Heart left ventricle (tissue), 16 donors: ENCODE measurements at regions of chr11 and their contacts with region 1.

Region 1: GRCh38 chr11:47071791-47072261 is 104.9 kb downstream of the ARFGAP2 start:
- DNase-seq: peak in 1 of 5 donors; percentile 47
- ATAC-seq: peak; percentile 33 to 69 (median 57)
- H3K4me3 ChIP-seq: no peak overlapping the region
- H3K27ac ChIP-seq: peak overlapping the region in 1 of 12 donors; percentile 11
- H3K4me1 ChIP-seq: peaks cover 0 to 13% (median 7%) of the 10 kb centered on the region in 12 donors
- H3K27me3 ChIP-seq: no peaks in the 10 kb centered on the region
- CTCF ChIP-seq: no peak
- POLR2A ChIP-seq: no peak

Region 2: DNA sequence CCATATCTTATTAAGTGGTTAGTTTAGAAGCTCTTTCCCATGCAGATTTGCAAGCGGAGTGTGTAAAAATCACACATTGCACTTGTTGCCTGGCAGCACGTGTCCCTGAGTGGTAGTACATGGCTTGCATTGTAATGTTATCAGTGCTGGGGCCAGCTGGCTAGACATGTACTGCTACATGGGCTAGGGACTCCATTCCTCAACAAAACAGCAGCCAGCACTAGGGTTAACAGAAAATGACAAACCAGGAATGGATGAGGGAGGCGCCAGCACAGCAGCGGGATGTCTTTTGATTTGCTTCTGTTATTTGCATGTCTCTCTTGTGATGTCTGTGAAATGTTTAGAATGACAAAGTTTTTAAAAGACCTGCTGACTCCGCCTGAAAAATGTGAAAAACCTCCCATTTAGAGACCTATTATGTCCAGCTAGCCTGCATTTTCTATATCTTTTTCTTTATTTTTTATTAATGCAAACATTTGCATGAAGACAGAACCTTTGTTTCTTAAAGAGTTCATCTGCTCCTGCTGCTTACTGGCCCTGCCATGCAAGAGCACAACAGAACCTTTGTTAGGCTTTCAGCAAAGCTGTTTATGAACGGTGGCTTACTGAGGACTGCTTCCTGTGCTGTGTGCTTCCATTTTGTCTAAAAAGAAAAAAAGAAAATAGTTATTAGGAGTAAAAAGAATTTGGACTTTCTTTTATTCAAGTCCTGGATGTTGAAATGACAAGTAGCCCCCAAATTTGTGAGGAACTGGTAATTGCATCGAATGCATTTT is 94.6 kb before region 1 on chr11:
- intact Hi-C with region 1: no loop called
- DNase-seq: no peak
- ATAC-seq: peak in 3 of 4 donors; percentile 39 to 47 (median 46)
- H3K4me3 ChIP-seq: no peak overlapping the region
- H3K27ac ChIP-seq: no peak overlapping the region
- H3K4me1 ChIP-seq: peaks cover 0 to 12% (median 0%) of the 10 kb centered on the region in 12 donors
- H3K27me3 ChIP-seq: no peaks in the 10 kb centered on the region
- CTCF ChIP-seq: no peak
- POLR2A ChIP-seq: no peak

Region 3: DNA sequence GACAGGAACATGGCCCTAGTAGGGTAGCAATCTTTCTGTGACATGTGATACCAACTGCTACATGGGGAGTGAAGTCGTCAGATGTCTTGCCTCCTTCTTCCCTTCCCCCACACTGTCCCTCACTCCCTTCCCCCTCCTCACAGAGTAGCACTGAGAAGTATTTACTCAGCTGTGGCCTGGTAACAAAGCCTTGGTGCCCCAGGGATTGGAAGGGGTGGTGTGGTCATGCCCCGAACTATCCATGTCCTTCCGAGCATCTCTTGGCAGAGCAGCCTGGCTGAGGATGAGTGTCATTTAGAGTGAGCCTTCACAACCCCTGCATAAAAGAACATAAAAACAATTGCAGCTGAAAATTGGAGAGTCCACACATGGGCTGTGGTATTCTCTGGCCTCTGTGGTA is 58.7 kb after region 1 on chr11:
- intact Hi-C with region 1: loop called in 1 of 10 experiments (anchors 10 kb)
- DNase-seq: no peak
- ATAC-seq: peak in 1 of 4 donors; percentile 30
- H3K4me3 ChIP-seq: no peak overlapping the region
- H3K27ac ChIP-seq: no peak overlapping the region
- H3K4me1 ChIP-seq: peaks cover 0 to 4% (median 0%) of the 10 kb centered on the region in 12 donors
- H3K27me3 ChIP-seq: no peaks in the 10 kb centered on the region
- CTCF ChIP-seq: no peak
- POLR2A ChIP-seq: no peak